ENCODE measurements at regions of chr1 and their contacts with region 1.

Region 1: DNA sequence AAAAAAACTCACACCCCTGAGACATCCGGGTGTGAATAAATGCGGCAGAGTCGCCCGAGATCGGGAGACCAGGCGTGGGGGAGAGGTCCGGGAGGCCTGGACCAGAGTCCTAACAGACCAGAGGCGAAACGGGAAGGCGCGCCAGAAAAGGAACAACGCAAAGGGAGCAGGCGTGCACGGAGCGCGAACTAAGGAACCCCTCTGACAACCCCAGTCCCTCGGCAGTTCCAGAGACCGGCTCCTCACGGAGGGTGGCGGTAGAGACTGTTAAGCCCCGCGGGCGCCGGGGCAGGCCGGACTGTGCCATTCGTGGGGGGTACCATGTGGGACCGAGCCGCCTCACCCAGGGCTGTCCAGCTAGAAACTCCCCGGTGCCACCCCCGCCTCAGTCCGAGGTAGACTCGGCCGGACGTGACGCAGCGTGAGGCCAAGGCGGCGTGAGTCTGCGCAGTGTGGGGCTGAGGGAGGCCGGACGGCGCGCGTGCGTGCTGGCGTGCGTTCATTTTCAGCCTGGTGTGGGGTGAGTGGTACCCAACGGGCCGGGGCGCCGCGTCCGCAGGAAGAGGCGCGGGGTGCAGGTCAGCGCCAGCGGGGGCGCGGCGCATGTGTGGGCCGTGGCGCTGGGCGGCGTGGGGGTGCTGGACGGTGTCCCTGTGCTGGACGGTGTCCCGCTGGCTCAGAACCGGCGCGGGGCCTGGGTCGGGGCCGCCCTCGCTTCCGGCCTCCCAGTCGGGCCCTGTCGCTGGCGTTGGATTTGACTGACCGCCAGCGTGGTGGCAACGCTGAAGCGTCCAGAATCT is at the start of gene PARK7:
- DNase-seq: peak; percentile 100
- H3K4me3 Mint-ChIP-seq: peak within 1 kb of the TSS; percentile 98
- H3K27ac Mint-ChIP-seq: peak within 1 kb of the TSS; percentile 96
- H3K4me1 Mint-ChIP-seq: peaks cover 63% of the 10 kb centered on the region
- H3K27me3 Mint-ChIP-seq: no peaks in the 10 kb centered on the region
- total RNA-seq, gene PARK7: 261 to 275 TPM

Region 2: GRCh38 chr1:7930645-7931445 is 30.6 kb before region 1 on chr1:
- CTCF ChIA-PET with region 1: no interaction called
- POLR2A ChIA-PET with region 1: interaction called, 21 read pairs
- DNase-seq: no peak
- H3K4me3 Mint-ChIP-seq: peak overlapping the region; percentile 48
- H3K27ac Mint-ChIP-seq: peak overlapping the region; percentile 88
- H3K4me1 Mint-ChIP-seq: peaks cover 32% of the 10 kb centered on the region
- H3K27me3 Mint-ChIP-seq: peaks cover 1% of the 10 kb centered on the region

Region 3: DNA sequence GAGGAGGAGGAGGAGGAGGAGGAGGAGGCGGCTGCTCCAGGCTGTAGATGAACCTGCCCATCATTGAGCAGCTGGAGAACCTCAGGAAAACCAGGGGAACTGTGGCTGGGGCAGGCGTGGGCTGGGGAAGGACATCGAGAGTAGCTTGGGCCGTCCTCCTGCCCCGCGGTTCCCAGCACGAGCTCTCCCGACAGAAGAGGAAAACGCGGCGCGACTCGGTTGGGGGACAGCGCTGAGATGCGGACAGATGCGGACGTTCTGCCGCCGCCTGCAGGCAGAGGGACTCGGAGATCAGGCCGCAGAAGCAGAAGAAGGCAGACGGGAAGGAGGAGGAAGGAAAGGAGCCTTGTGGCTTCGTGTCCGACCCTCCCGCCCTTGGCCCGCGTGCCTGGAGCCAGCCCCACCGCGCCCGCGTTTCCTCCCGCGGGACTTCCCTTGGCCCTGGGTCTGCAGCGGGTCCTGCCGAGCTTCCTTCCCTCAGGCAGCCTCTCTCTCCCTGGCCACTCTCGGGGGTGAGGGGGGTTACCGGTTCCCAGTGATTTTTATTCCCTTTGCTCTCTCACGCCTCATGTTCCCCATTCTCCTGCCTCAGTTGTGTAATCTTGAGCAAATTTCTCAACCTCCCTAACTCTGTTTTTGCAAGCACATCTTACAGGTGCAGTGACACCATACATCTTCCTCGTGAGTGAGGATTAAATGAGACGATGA is 19.0 kb before region 1 on chr1:
- CTCF ChIA-PET with region 1: interaction called, 3 read pairs
- POLR2A ChIA-PET with region 1: interaction called, 19 read pairs
- DNase-seq: peak; percentile 35
- H3K4me3 Mint-ChIP-seq: peak overlapping the region; percentile 52
- H3K27ac Mint-ChIP-seq: no peak overlapping the region
- H3K4me1 Mint-ChIP-seq: peaks cover 46% of the 10 kb centered on the region
- H3K27me3 Mint-ChIP-seq: peaks cover 15% of the 10 kb centered on the region

Region 4: GRCh38 chr1:7948960-7949359 is 12.5 kb before region 1 on chr1:
- CTCF ChIA-PET with region 1: interaction called, 12 read pairs
- POLR2A ChIA-PET with region 1: interaction called, 61 read pairs
- DNase-seq: peak; percentile 47
- H3K4me3 Mint-ChIP-seq: peak overlapping the region; percentile 26
- H3K27ac Mint-ChIP-seq: peak overlapping the region; percentile 82
- H3K4me1 Mint-ChIP-seq: peaks cover 34% of the 10 kb centered on the region
- H3K27me3 Mint-ChIP-seq: no peaks in the 10 kb centered on the region

Region 5: GRCh38 chr1:8238851-8239305 is 277.5 kb after region 1 on chr1:
- CTCF ChIA-PET with region 1: no interaction called
- POLR2A ChIA-PET with region 1: no interaction called
- DNase-seq: no peak
- H3K4me3 Mint-ChIP-seq: no peak overlapping the region
- H3K27ac Mint-ChIP-seq: no peak overlapping the region
- H3K4me1 Mint-ChIP-seq: peaks cover 4% of the 10 kb centered on the region
- H3K27me3 Mint-ChIP-seq: peaks cover 5% of the 10 kb centered on the region

Measured in activated CD4-positive, alpha-beta memory T cell treated with anti-CD3 and anti-CD28 coated beads, Interleukin-2, amount 10 ng/mL, durations not matched to agents 7 days and 5 days (primary cell).